Prostate gland (tissue), 2 donors: ENCODE measurements at regions of chr16 and their contacts with region 1.

Region 1: GRCh38 chr16:52191531-52192134 is 355.3 kb downstream of the TOX3 start:
- DNase-seq: peak; percentile 50
- H3K4me3 ChIP-seq: no peak overlapping the region
- H3K27ac ChIP-seq: no peak overlapping the region
- H3K4me1 ChIP-seq: no peaks in the 10 kb centered on the region
- H3K27me3 ChIP-seq: no peaks in the 10 kb centered on the region
- CTCF ChIP-seq: peak; percentile 79 to 92 (median 86)
- POLR2A ChIP-seq: no peak

Region 2: GRCh38 chr16:52912565-52913173 is 721.0 kb after region 1 on chr16:
- intact Hi-C with region 1: loop called (anchors 5 kb)
- DNase-seq: peak; percentile 56
- H3K4me3 ChIP-seq: no peak overlapping the region
- H3K27ac ChIP-seq: no peak overlapping the region
- H3K4me1 ChIP-seq: no peaks in the 10 kb centered on the region
- H3K27me3 ChIP-seq: no peaks in the 10 kb centered on the region
- CTCF ChIP-seq: peak; percentile 65 to 79 (median 67)
- POLR2A ChIP-seq: no peak